CD8-positive, alpha-beta T cell (primary cell): ENCODE measurements at regions of chr19 and their contacts with region 1.

Region 1: DNA sequence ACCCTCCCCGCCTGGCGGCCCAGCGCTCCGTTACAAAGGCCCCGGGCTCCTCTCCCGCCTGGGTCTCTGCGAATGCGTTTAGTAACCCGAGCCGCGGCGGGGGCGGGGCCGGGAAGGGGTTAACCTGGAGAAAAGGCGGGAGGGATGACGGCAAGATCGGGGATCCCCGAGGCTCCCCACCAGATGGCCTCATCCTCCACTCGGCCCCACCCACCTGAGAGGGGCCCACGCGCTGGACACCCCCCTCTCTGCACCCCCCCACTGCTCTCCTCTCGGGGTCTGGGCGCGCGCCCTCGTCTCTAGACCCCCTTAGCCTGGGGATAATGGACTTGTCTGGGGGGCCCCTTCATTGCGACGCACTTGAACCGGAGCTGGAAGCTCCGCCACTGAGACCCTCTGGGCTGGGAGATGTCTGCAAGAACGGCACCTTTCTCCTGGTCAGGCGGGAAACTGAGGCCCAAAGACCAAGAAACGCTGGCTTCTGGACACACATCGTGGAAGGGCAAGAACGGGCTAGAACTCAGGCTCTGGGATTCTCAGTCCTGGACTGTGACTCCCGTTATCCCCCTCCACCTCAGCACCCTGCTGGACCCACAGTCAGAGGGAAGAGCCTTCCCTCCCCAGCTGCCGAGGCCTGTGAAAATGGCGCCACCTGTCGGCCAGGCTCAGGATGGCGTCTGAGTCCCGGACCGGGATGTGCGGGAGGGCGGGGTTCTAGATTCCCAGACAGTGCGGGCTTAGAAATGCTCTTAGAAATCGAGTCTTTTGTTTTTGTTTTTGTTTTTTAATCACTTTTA is 2.9 kb upstream of the LTBP4 start:
- DNase-seq: peak; percentile 68 to 90 (median 83)
- ATAC-seq: peak; percentile 60
- H3K4me3 ChIP-seq: no peak overlapping the region
- H3K4me3 Mint-ChIP-seq: no peak overlapping the region
- H3K27ac ChIP-seq: no peak overlapping the region
- H3K27ac Mint-ChIP-seq: no peak overlapping the region
- H3K4me1 ChIP-seq: peaks cover 63% of the 10 kb centered on the region
- H3K4me1 Mint-ChIP-seq: peaks cover 50% of the 10 kb centered on the region
- H3K27me3 ChIP-seq: peaks cover 35 to 50% of the 10 kb centered on the region in 2 experiments
- H3K27me3 Mint-ChIP-seq: peaks cover 31% of the 10 kb centered on the region
- CTCF ChIP-seq: peak; percentile 98

Region 2: DNA sequence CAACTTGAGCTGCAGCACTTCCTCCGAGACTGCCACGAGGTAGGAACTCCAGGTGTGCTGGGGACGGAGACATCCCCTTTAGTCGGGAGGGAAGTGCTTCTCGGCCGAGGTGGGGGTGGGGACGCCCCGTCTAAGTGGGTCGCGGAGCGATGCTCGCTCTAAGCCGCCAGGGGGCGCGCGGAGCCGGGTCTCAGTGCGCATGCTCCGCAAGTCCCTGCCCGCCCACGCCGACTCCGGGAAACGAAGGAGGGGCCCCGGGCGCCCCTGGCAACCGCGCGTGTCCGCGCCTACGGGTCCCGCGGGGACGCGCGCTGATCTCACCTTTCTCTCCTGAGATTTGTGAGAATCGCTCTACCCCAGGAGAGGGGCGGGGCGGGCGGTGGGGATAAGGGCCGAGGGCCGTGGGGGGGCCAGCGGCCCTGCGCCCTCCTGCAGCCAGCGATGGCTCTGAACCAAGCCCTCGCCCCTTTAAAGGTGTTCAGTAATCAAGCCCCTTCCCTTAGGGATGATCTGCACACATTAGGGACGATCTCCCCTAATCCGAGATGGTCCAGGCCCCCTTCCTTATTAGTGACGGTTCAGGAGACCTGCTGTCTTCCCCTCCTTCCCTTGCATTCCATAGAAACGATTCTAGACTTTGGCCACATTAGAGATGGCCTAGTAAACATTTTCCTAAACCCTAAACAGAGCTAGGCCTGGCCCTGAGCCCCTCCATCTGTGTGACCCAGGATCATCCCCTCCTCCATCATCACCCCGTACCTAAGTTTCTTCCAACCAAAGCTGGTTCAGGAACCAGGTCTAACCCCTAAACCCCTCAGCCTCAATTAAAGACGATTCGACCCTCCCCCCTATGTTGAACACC is 69.0 kb before region 1 on chr19:
- CTCF ChIA-PET with region 1: interaction called, 7 read pairs
- POLR2A ChIA-PET with region 1: no interaction called
- intact Hi-C with region 1: loop called (anchors 1 kb)
- DNase-seq: peak; percentile 77 to 94 (median 89)
- ATAC-seq: peak; percentile 90
- H3K4me3 ChIP-seq: peak overlapping the region; percentile 41 to 46
- H3K4me3 Mint-ChIP-seq: peak overlapping the region; percentile 66
- H3K27ac ChIP-seq: no peak overlapping the region
- H3K27ac Mint-ChIP-seq: peak overlapping the region; percentile 33
- H3K4me1 ChIP-seq: peaks cover 13% of the 10 kb centered on the region
- H3K4me1 Mint-ChIP-seq: peaks cover 14% of the 10 kb centered on the region
- H3K27me3 ChIP-seq: peaks cover 5 to 8% of the 10 kb centered on the region in 2 experiments
- H3K27me3 Mint-ChIP-seq: peaks cover 20% of the 10 kb centered on the region
- CTCF ChIP-seq: peak; percentile 92

Region 3: DNA sequence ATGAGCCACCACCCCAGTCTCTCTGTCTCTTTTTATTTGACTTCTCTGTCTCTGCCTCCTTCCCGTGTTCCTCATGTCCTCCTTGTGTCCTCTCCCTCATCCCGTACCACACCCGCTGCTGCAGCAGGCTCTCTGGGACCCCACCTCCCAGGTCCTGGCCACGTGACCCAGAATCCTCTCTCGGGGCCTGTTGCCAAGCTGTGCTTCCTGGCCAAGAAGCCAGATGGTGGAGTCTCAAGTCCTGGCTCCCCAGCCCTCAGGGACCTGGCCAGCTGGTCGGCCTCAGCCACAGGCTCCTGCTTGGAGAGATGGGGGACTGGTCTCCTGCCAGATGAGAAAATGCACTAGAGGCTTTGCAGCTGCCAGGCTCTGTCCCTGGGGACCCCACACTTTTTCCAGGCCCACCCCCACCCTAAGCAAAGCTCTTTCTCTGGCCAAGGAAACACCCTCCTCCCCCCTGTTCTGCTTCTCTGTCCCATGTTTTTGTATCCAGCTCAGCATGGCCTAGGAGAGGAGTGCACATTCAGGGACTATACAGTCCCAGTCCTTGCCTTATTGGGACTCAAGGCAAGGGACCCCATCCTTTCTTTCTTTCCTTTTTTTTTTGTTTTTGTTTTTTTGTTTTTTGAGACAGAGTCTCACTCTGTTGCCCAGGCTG is 56.0 kb before region 1 on chr19:
- CTCF ChIA-PET with region 1: interaction called, 7 read pairs
- POLR2A ChIA-PET with region 1: no interaction called
- intact Hi-C with region 1: loop called in 1 of 2 experiments (anchors 1 kb)
- DNase-seq: no peak
- ATAC-seq: no peak
- H3K4me3 ChIP-seq: no peak overlapping the region
- H3K4me3 Mint-ChIP-seq: no peak overlapping the region
- H3K27ac ChIP-seq: no peak overlapping the region
- H3K27ac Mint-ChIP-seq: no peak overlapping the region
- H3K4me1 ChIP-seq: no peaks in the 10 kb centered on the region
- H3K4me1 Mint-ChIP-seq: no peaks in the 10 kb centered on the region
- H3K27me3 ChIP-seq: no peaks in the 10 kb centered on the region
- H3K27me3 Mint-ChIP-seq: peaks cover 15% of the 10 kb centered on the region
- CTCF ChIP-seq: no peak

Region 4: DNA sequence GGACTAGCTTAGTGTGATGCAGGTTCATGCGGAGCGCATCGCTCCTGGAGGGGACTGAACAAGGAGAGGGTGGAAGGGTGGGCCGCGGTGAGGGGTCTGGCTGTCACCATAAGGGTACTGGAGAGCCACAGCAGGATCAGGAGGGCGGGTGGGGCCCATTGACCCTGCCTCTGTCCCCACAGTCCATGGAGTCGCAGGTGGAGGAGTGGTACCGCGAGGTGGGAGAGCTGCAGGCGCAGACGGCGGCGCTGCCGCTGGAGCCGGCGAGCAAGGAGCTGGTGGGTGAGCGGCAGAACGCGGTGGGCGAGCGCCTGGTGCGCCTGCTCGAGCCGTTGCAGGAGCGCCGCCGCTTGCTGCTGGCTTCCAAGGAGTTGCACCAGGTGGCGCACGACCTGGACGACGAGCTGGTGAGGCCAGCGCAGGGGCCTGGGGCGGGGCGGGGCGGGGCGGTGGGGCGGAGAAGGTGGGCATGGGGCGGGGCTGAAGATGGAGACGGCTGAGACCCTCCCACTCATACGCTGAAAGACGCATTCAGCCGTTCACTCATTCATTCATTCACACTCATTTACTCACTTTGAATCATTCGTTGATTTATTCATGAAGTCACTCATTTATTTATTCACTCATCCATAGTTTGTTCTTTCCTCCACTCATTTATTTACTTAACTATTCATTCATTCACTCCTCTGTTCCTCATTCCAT is 49.2 kb before region 1 on chr19:
- CTCF ChIA-PET with region 1: interaction called, 40 read pairs
- POLR2A ChIA-PET with region 1: no interaction called
- intact Hi-C with region 1: loop called (anchors 1 kb)
- DNase-seq: peak; percentile 44 to 82 (median 74)
- ATAC-seq: peak; percentile 92
- H3K4me3 ChIP-seq: no peak overlapping the region
- H3K4me3 Mint-ChIP-seq: peak overlapping the region; percentile 22
- H3K27ac ChIP-seq: no peak overlapping the region
- H3K27ac Mint-ChIP-seq: no peak overlapping the region
- H3K4me1 ChIP-seq: peaks cover 4% of the 10 kb centered on the region
- H3K4me1 Mint-ChIP-seq: peaks cover 9% of the 10 kb centered on the region
- H3K27me3 ChIP-seq: peaks cover 16 to 26% of the 10 kb centered on the region in 2 experiments
- H3K27me3 Mint-ChIP-seq: peaks cover 57% of the 10 kb centered on the region
- CTCF ChIP-seq: peak; percentile 55

Region 5: DNA sequence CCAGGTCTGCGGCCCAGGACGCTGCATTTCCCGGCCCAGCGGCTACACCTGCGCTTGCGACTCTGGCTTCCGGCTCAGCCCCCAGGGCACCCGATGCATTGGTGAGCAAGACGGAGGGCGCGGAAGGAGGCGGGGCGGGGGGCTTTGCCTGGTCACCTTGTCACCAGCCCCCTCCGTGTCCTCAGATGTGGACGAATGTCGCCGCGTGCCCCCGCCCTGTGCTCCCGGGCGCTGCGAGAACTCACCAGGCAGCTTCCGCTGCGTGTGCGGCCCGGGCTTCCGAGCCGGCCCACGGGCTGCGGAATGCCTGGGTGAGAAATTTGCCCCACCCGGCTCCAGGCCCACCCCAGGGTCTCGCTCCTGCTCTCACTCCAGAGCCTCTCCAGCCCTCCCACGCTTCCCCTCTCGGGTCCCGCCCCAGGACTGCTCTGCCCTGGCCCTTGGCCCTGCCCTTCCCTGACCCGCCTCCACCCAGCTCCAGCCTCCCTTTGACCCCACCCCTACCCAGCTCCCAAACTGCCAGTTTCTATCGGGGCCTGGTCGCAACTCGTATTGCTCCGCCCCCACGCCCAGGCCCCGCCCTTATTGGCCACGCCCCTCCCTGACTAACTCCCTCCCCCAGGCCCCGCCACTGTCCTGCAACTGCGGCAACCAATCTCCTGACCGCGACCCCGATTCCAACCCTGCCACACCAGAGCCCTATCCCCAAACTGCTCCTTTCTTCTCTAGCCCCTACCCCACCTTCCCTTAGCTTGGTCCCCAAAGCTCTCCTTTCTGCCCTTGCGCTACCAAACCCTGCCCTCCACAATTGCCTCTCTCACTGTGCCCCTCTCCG is 11.5 kb after region 1 on chr19:
- CTCF ChIA-PET with region 1: interaction called, 9 read pairs
- POLR2A ChIA-PET with region 1: interaction called, 15 read pairs
- intact Hi-C with region 1: loop called in 1 of 2 experiments (anchors 2 kb)
- DNase-seq: peak; percentile 71 to 90 (median 84)
- ATAC-seq: peak; percentile 35
- H3K4me3 ChIP-seq: peak overlapping the region; percentile 50 to 56
- H3K4me3 Mint-ChIP-seq: peak overlapping the region; percentile 78
- H3K27ac ChIP-seq: peak overlapping the region; percentile 72 to 89
- H3K27ac Mint-ChIP-seq: peak overlapping the region; percentile 94
- H3K4me1 ChIP-seq: peaks cover 44% of the 10 kb centered on the region
- H3K4me1 Mint-ChIP-seq: peaks cover 68% of the 10 kb centered on the region
- H3K27me3 ChIP-seq: no peaks in the 10 kb centered on the region
- H3K27me3 Mint-ChIP-seq: no peaks in the 10 kb centered on the region
- CTCF ChIP-seq: no peak

Region 6: DNA sequence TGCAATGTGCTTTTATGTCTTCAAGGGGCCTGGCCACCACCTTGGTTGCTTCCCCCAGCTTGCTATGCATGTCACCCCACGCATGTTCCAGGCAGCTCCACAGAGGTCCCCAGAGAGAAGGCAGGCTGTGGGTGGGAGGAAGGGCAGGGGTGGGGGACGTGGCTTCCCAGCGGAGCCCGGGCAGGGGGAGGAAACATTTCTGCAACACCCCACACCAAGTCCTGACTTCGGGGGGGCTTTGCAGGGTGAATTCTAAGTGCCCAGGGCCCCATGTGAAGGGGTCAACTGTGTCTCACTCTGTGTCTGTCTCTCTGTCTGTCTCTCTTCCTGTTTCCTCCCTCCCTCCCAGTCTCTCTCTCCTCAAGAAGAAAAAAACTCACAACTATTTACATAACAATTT is 42.4 kb after region 1 on chr19:
- CTCF ChIA-PET with region 1: interaction called, 28 read pairs
- POLR2A ChIA-PET with region 1: no interaction called
- intact Hi-C with region 1: no loop called
- DNase-seq: peak in 1 of 9 experiments; percentile 52
- ATAC-seq: peak; percentile 26
- H3K4me3 ChIP-seq: no peak overlapping the region
- H3K4me3 Mint-ChIP-seq: no peak overlapping the region
- H3K27ac ChIP-seq: no peak overlapping the region
- H3K27ac Mint-ChIP-seq: no peak overlapping the region
- H3K4me1 ChIP-seq: peaks cover 6% of the 10 kb centered on the region
- H3K4me1 Mint-ChIP-seq: peaks cover 11% of the 10 kb centered on the region
- H3K27me3 ChIP-seq: peaks cover 0 to 3% of the 10 kb centered on the region in 2 experiments
- H3K27me3 Mint-ChIP-seq: peaks cover 2% of the 10 kb centered on the region
- CTCF ChIP-seq: no peak